ENCODE measurements at regions of chr10 and their contacts with region 1.

Region 1: GRCh38 chr10:87875929-87876571 is 12.6 kb downstream of the PTEN start:
- DNase-seq: no peak
- ATAC-seq: no peak
- H3K4me3 Mint-ChIP-seq: no peak overlapping the region
- H3K27ac Mint-ChIP-seq: no peak overlapping the region
- H3K4me1 Mint-ChIP-seq: peaks cover 63% of the 10 kb centered on the region
- H3K27me3 Mint-ChIP-seq: no peaks in the 10 kb centered on the region
- CTCF ChIP-seq: no peak

Region 2: DNA sequence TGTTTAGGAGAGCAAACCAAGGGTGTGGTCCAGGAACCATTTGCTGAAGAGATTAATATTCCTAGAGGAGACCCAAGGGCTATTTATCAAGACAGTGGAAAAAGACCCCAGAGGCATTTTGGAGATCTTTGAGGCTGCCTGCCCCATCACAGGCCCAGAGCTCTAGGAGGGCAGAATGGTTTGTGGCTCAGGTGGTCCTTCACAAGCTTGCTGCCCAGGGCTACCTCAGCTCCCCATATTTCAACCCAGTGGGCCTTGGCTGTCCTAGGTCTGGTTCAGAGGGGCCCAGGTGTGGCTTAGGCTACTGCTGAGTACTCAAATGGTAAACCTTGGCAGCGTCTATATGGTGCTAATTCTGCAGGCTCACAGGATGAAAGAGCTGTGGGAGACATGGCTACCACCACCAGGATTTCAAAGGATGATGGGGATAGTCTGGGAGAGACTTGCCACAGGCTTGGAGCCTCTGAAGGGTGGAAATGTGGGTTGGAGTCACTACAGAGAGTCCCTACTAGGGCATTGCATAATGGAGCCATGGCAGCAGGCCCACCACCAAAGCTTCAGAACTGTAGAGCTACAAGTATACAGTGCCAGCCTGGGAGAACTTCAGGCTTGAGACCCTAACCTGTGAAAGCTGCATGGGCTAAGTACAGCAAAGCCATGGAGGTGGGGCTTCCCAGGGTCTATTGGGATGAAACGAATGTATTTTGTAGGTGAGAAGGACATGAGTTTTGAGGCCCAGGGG is 11.7 kb after region 1 on chr10:
- CTCF ChIA-PET with region 1: no interaction called
- POLR2A ChIA-PET with region 1: interaction called, 4 read pairs
- intact Hi-C with region 1: loop called (anchors 2 kb)
- DNase-seq: no peak
- ATAC-seq: peak; percentile 21
- H3K4me3 Mint-ChIP-seq: no peak overlapping the region
- H3K27ac Mint-ChIP-seq: no peak overlapping the region
- H3K4me1 Mint-ChIP-seq: peaks cover 40% of the 10 kb centered on the region
- H3K27me3 Mint-ChIP-seq: no peaks in the 10 kb centered on the region
- CTCF ChIP-seq: no peak